ENCODE measurements at regions of chr14 and their contacts with region 1.

Region 1: GRCh38 chr14:96501742-96502617 is at the start of gene PAPOLA:
- DNase-seq: peak; percentile 96
- H3K4me3 ChIP-seq: peak within 1 kb of the TSS; percentile 59 to 88 (median 80)
- H3K27ac ChIP-seq: peak within 1 kb of the TSS; percentile 87 to 98 (median 95)
- H3K4me1 ChIP-seq: peaks cover 0 to 46% (median 38%) of the 10 kb centered on the region in 4 donors
- H3K27me3 ChIP-seq: no peaks in the 10 kb centered on the region
- CTCF ChIP-seq: peak in 1 of 4 experiments; percentile 14
- EP300 ChIP-seq: no peak
- POLR2A ChIP-seq: peak; percentile 44 to 63
- total RNA-seq, gene PAPOLA: 113 to 154 (median 133) TPM

Region 2: DNA sequence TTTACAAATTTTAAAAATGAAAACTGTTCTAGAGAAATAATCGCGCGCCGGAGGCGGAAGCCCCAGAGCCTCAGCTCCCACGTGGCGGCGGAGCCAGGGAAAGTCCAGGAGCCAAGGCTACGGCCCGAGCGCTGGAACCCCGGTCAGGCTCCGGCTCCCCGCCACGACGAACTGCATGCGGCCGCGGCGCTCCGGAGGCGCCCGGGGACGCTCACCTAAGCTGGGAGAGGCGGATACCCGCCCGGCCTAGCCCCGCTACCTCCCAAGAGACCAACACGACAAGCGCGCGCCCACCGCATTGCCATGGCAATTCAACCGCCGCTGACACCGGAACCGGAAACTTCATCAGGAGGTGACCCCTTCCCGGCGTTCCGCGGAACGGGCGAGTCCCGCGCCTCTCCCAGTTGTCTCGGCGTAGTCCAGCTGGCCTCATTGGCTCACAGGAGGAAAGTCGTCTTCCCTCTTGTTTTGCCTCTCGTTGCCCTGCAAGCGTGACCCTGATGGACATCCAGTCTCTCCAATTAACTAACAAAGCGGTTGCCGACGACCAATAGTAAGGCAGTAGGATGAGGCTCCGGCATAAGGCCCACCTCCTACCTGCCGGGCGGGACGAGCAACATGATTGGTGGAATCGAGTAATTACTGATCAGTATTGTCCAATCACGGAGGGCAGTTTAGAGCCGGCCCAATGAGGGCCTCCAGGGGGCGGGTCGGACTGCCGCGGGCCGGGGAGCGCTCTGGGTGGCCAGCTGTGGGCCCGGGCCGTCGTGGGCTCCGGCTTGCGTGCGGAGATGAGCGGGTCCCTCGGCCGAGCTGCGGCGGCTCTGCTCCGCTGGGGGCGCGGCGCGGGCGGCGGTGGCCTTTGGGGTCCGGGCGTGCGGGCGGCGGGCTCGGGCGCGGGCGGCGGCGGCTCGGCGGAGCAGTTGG is 967.4 kb before region 1 on chr14 and contains the start of gene GLRX5:
- intact Hi-C with region 1: loop called (anchors 10 kb)
- DNase-seq: peak; percentile 100
- H3K4me3 ChIP-seq: peak within 1 kb of the TSS; percentile 85 to 100 (median 94)
- H3K27ac ChIP-seq: peak within 1 kb of the TSS; percentile 82 to 91 (median 87)
- H3K4me1 ChIP-seq: peaks cover 0 to 58% (median 50%) of the 10 kb centered on the region in 4 donors
- H3K27me3 ChIP-seq: no peaks in the 10 kb centered on the region
- CTCF ChIP-seq: no peak
- EP300 ChIP-seq: no peak
- POLR2A ChIP-seq: no peak
- total RNA-seq, gene GLRX5: 30.5 to 61.4 (median 44.3) TPM

Region 3: GRCh38 chr14:96281486-96281885 is 220.5 kb before region 1 on chr14:
- intact Hi-C with region 1: loop called (anchors 10 kb)
- DNase-seq: no peak
- H3K4me3 ChIP-seq: no peak overlapping the region
- H3K27ac ChIP-seq: peak overlapping the region in 3 of 4 donors; percentile 17 to 58 (median 47)
- H3K4me1 ChIP-seq: peaks cover 0 to 30% (median 22%) of the 10 kb centered on the region in 4 donors
- H3K27me3 ChIP-seq: no peaks in the 10 kb centered on the region
- CTCF ChIP-seq: no peak
- EP300 ChIP-seq: peak in 2 of 4 donors; percentile 41 to 79
- POLR2A ChIP-seq: no peak

Region 4: GRCh38 chr14:96362965-96363756 is 138.8 kb before region 1 on chr14 and contains the starts of genes ATG2B and GSKIP:
- intact Hi-C with region 1: loop called (anchors 5 kb)
- DNase-seq: peak; percentile 96
- H3K4me3 ChIP-seq: peak within 1 kb of the TSS; percentile 74 to 98 (median 98)
- H3K27ac ChIP-seq: peak within 1 kb of the TSS; percentile 90 to 98 (median 98)
- H3K4me1 ChIP-seq: peaks cover 0 to 46% (median 35%) of the 10 kb centered on the region in 4 donors
- H3K27me3 ChIP-seq: no peaks in the 10 kb centered on the region
- CTCF ChIP-seq: no peak
- EP300 ChIP-seq: no peak
- POLR2A ChIP-seq: peak; percentile 56 to 60
- total RNA-seq, gene ATG2B: 17.9 to 27.1 (median 25.0) TPM
- total RNA-seq, gene GSKIP: 13.2 to 30.7 (median 19.3) TPM

Region 5: GRCh38 chr14:96631621-96632362 is 129.8 kb after region 1 on chr14:
- intact Hi-C with region 1: no loop called
- DNase-seq: no peak
- H3K4me3 ChIP-seq: no peak overlapping the region
- H3K27ac ChIP-seq: no peak overlapping the region
- H3K4me1 ChIP-seq: no peaks in the 10 kb centered on the region
- H3K27me3 ChIP-seq: no peaks in the 10 kb centered on the region
- CTCF ChIP-seq: no peak
- EP300 ChIP-seq: no peak
- POLR2A ChIP-seq: no peak

Region 6: GRCh38 chr14:96796851-96797581 is 295.0 kb after region 1 on chr14 and contains the start of gene VRK1:
- intact Hi-C with region 1: loop called (anchors 5 kb)
- DNase-seq: peak; percentile 97
- H3K4me3 ChIP-seq: peak within 1 kb of the TSS; percentile 52 to 77 (median 64)
- H3K27ac ChIP-seq: peak within 1 kb of the TSS in 3 of 4 donors; percentile 6 to 28 (median 21)
- H3K4me1 ChIP-seq: peaks cover 0 to 11% (median 9%) of the 10 kb centered on the region in 4 donors
- H3K27me3 ChIP-seq: no peaks in the 10 kb centered on the region
- CTCF ChIP-seq: no peak
- EP300 ChIP-seq: no peak
- POLR2A ChIP-seq: no peak
- total RNA-seq, gene VRK1: 12.8 to 25.7 (median 19.5) TPM

Measured in sigmoid colon (tissue), 7 donors.